GM10248 (cell line): ENCODE measurements at regions of chr20 and their contacts with region 1.

Region 1: DNA sequence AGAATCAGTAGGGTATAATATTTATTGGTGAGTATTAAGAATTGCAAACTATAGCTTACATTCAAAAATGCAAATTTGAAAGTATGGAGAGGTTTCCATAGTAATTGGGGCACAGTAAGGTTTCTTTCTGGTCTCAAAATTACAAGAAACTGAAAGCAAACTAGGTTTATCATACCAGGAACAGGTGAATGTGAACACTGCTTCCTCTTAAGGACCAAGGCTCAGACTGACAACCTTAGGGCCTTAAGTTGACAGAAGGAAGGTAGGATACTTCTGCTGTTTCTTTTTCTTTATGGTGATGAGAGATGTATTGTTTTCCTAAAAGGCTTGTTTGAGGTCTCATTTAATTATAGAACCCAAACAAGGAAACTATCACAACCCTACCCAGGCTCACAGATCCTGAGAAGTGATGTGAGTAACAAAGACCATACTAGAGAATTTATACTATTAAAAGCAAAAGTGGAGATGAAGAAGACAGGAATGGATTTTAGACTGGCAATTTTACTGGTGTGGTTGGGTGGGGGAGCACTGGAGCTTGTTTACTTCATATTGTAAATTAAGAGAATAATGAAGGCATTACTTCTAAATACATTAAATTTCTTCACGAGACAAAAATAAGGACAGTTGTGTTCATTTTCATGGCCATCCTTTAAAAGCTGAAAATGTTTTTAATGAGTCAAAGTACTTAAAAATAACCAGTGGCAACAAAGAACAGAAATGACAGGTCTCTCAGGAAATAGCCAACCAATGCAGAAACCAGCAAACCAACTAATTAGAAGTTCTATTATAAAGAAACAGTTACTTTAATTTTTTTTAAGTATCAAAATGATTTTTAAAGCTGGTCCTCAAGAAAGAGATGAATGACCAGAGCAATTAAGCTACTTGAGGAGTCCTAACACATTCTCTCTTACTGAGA is 21.3 kb downstream of the STAU1 start:
- DNase-seq: peak; percentile 50
- CTCF ChIP-seq: no peak

Region 2: DNA sequence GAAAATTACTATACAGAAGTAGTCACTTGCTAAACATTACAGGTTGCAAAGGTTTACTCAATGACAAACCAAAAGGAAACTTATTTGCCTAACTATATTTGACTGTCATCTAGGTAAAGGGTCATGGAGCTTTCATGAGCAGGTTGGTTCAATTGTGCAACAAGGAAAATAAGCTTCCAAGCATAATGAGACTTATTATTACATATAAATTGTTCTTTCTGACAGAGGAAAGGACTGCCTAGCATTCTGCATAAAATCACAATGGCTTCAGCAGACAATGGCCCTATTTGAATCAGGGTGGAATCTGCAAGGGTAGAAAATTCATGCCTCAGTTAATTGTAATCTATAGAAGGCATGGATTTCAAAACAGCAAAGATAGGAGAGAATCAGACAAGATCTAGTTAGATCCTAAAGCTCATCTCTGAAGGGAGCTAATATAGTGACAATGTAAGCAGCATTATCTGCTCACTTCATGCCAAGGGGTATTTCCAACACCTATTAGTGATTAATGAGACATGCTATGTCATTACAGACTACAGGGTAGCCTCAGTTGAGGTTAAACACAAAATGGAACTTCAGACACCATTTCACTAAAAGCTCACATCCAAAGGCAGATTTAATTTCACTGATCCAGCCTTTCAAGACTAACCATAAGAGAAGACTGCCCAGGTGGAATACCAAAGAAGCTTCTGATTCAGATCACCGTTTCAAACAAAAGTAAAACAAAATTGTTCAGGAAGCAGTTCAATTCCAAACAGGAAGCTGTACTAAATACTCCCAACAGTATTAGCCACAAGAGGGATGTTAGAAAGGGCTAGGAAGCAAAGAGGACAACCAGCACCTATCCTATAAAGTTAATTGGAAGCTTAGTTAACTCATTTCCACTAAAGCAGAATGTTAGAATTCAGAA is 12.8 kb after region 1 on chr20:
- CTCF ChIA-PET with region 1: interaction called, 40 read pairs
- POLR2A ChIA-PET with region 1: no interaction called
- DNase-seq: peak; percentile 42
- CTCF ChIP-seq: no peak